ENCODE measurements at regions of chr16 and their contacts with region 1.

Region 1: DNA sequence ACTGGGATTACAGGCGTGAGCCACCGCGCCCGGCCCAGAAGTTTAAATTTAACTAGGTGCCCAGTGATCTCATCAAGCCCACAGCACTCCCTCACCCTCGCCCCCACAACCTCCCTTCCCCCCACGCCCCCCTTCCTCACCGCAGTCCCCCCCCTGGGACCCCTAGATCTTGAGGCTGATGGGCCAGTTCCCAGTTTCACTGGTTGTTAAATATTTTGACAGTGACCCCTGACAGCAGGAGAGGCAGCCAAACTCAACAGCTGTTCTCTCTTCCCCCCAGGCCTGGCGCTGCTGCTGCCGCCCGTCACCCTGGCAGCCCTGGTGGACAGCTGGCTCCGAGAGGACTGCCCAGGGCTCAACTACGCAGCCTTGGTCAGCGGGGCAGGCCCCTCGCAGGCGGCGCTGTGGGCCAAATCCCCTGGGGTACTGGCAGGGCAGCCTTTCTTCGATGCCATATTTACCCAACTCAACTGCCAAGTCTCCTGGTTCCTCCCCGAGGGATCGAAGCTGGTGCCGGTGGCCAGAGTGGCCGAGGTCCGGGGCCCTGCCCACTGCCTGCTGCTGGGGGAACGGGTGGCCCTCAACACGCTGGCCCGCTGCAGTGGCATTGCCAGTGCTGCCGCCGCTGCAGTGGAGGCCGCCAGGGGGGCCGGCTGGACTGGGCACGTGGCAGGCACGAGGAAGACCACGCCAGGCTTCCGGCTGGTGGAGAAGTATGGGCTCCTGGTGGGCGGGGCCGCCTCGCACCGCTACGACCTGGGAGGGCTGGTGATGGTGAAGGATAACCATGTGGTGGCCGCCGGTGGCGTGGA is 15.6 kb downstream of the QPRT start:
- DNase-seq: no peak
- ATAC-seq: no peak
- H3K4me3 ChIP-seq: no peak overlapping the region
- H3K4me3 Mint-ChIP-seq: no peak overlapping the region
- H3K27ac ChIP-seq: no peak overlapping the region
- H3K27ac Mint-ChIP-seq: no peak overlapping the region
- H3K4me1 ChIP-seq: no peaks in the 10 kb centered on the region
- H3K4me1 Mint-ChIP-seq: peaks cover 0 to 11% (median 5%) of the 10 kb centered on the region in 7 donors
- H3K27me3 ChIP-seq: no peaks in the 10 kb centered on the region
- H3K27me3 Mint-ChIP-seq: no peaks in the 10 kb centered on the region

Region 2: GRCh38 chr16:29943846-29944669 is 249.5 kb after region 1 on chr16:
- CTCF ChIA-PET with region 1: no interaction called
- POLR2A ChIA-PET with region 1: no interaction called
- intact Hi-C with region 1: no loop called
- DNase-seq: no peak
- ATAC-seq: no peak
- H3K4me3 ChIP-seq: no peak overlapping the region
- H3K4me3 Mint-ChIP-seq: no peak overlapping the region
- H3K27ac ChIP-seq: peak overlapping the region; percentile 14
- H3K27ac Mint-ChIP-seq: peak overlapping the region in 3 of 9 donors; percentile 9 to 57 (median 38)
- H3K4me1 ChIP-seq: no peaks in the 10 kb centered on the region
- H3K4me1 Mint-ChIP-seq: peaks cover 0 to 19% (median 9%) of the 10 kb centered on the region in 7 donors
- H3K27me3 ChIP-seq: no peaks in the 10 kb centered on the region
- H3K27me3 Mint-ChIP-seq: peaks cover 0 to 8% (median 0%) of the 10 kb centered on the region in 5 donors

Region 3: DNA sequence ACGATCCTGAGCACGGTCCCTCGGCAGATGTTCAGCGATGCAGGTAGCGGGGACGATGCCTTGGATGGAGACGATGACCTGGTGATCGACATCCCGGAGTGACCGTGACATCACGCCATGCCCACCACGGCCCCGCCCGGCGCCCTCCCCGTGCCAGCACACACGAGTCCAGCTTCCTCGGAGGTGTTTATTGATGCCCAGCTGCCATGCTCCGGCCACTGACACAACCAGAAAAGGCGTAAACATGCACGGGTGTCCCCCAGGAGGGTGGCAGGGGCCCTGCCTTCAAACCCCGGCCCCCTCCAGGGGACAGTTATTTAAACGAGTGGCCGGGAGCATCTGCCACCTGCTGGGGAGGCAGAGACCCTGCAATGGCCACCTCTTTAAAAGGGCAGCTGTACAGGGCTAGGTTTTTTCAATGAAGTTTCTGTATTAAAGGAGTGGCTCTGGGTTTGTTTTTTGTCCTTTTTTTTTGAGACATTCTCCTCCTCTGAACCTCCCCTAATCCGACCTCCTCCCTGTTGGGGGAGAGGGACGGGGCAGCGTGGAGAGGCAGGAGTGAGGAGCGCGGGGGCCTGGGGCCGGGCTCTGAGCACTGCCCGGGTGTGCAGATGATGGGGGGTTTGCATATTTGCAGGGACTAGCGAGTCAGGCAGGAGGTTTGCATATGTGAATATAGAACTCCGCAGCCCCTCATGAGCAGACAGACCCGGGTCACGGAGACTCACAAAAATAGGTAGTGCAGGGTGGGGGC is 310.9 kb after region 1 on chr16:
- CTCF ChIA-PET with region 1: interaction called, 10 read pairs
- POLR2A ChIA-PET with region 1: interaction called, 3 read pairs
- intact Hi-C with region 1: loop called (anchors 1 kb)
- DNase-seq: peak in 7 of 9 donors; percentile 30 to 48 (median 43)
- ATAC-seq: peak; percentile 76
- H3K4me3 ChIP-seq: no peak overlapping the region
- H3K4me3 Mint-ChIP-seq: no peak overlapping the region
- H3K27ac ChIP-seq: no peak overlapping the region
- H3K27ac Mint-ChIP-seq: peak overlapping the region in 1 of 9 donors; percentile 48
- H3K4me1 ChIP-seq: peaks cover 4 to 6% of the 10 kb centered on the region in 2 donors
- H3K4me1 Mint-ChIP-seq: peaks cover 0 to 9% (median 4%) of the 10 kb centered on the region in 7 donors
- H3K27me3 ChIP-seq: peaks cover 0 to 4% of the 10 kb centered on the region in 2 donors
- H3K27me3 Mint-ChIP-seq: peaks cover 0 to 19% (median 0%) of the 10 kb centered on the region in 5 donors

Region 4: DNA sequence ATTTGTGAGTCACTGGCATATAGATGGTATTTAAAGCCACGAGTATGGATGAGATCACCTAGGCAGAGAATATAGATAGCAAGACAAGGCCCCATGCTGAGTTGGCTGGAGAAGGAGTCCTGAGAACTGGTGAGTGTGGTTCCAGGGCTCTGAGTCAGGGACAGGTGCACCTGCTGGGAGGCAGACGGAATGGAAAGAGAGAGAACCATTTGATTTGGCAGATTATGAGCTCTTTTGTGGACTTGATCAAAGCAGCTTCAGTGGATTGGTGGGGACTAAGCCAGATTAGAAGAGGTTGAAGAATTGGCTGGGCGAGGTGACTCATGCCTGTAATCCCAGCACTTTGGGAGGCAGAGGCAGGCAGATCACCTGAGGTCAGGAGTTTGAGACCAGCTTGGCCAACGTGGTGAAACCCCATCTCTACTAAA is 324.2 kb after region 1 on chr16:
- CTCF ChIA-PET with region 1: interaction called, 3 read pairs
- POLR2A ChIA-PET with region 1: no interaction called
- intact Hi-C with region 1: loop called (anchors 1 kb)
- DNase-seq: no peak
- ATAC-seq: no peak
- H3K4me3 ChIP-seq: no peak overlapping the region
- H3K4me3 Mint-ChIP-seq: peak overlapping the region in 1 of 10 donors; percentile 0
- H3K27ac ChIP-seq: no peak overlapping the region
- H3K27ac Mint-ChIP-seq: no peak overlapping the region
- H3K4me1 ChIP-seq: peaks cover 8% of the 10 kb centered on the region in 2 donors
- H3K4me1 Mint-ChIP-seq: peaks cover 5 to 17% (median 10%) of the 10 kb centered on the region in 7 donors
- H3K27me3 ChIP-seq: no peaks in the 10 kb centered on the region
- H3K27me3 Mint-ChIP-seq: peaks cover 0 to 29% (median 0%) of the 10 kb centered on the region in 5 donors

Measured in naive thymus-derived CD4-positive, alpha-beta T cell (primary cell).